ENCODE measurements at regions of chr1 and their contacts with region 1.

Region 1: DNA sequence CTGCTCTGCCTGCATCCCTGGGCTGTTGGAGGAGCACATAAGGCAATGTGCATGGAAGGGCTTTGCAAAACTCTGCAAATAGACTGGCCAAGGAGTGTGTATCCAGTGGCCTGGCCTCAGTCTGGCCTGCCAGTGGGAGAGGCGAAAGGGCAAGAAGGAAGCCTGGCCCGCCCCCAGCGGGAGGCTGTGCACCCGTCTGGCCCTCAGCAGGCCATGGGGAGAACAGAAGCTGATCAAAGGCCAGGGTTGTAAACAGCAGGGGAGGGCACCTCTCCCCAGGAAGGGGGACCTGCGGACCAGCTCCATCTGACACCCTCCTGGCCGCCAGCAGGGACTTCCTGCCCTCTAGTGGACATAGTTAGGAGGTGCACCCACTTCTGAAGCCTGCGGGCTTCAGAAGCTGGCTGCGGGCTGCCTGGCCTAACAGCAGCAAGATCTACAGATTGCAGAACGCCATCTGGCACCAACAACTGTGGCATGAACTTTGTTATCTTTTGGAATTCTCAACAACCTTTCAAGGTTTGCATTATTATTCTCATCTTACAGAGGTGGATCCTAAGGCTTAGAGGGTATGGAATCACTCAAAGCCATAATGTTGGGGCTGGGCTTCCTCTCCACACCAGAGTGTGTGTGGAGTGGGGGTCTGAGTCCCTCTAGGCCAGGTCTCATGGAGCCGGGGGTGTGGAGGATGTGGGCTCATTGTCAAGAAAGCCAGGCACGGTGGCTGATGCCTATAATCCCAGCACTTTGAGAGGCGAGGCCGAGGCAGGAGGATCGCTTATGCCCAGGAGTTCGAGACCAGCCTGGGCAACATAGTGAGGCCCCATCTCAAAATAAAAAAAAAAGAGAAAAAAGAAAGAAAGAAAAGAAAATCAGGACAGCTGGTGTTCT is 18.9 kb upstream of the CDK18 start:
- DNase-seq: peak; percentile 84
- H3K4me3 ChIP-seq: no peak overlapping the region
- H3K27ac ChIP-seq: no peak overlapping the region
- H3K4me1 ChIP-seq: no peaks in the 10 kb centered on the region
- H3K27me3 ChIP-seq: no peaks in the 10 kb centered on the region
- CTCF ChIP-seq: peak; percentile 96

Region 2: GRCh38 chr1:205335643-205336091 is 149.9 kb before region 1 on chr1:
- CTCF ChIA-PET with region 1: interaction called, 13 read pairs
- POLR2A ChIA-PET with region 1: no interaction called
- intact Hi-C with region 1: loop called (anchors 1 kb)
- DNase-seq: peak; percentile 84
- H3K4me3 ChIP-seq: no peak overlapping the region
- H3K27ac ChIP-seq: no peak overlapping the region
- H3K4me1 ChIP-seq: no peaks in the 10 kb centered on the region
- H3K27me3 ChIP-seq: no peaks in the 10 kb centered on the region
- CTCF ChIP-seq: peak; percentile 99

Region 3: DNA sequence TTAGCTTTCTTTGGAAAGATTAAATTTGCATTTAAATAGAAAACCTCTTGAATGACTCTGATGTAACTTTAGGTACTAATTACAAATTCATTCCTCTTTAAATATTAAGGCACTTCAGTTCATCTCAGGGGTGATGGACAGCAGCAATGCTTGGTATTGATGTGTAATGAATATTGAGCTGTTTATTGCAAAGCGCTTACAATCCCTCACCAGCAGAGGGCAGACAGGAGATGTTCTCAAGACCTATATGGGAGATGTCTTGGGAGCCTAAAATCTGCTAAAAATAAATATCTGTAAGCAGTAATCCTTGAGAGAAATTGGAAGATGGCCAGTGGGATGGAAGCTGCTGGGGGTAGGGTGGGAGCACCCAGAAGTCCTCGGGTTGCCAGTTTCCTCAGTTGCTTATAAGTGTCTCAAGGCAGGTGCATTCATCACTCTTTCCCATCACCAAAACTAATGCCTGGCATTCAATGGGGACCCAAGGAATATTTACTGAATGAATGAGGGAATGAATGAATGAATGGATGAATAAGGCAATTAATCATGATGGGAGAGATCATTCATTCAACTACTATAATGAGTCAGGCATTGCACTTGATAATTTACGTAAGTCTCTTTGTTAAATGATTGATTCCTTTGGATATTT is 131.2 kb before region 1 on chr1:
- CTCF ChIA-PET with region 1: interaction called, 47 read pairs
- POLR2A ChIA-PET with region 1: no interaction called
- intact Hi-C with region 1: loop called (anchors 1 kb)
- DNase-seq: peak; percentile 81
- H3K4me3 ChIP-seq: no peak overlapping the region
- H3K27ac ChIP-seq: no peak overlapping the region
- H3K4me1 ChIP-seq: peaks cover 15% of the 10 kb centered on the region
- H3K27me3 ChIP-seq: no peaks in the 10 kb centered on the region
- CTCF ChIP-seq: peak; percentile 94

Region 4: DNA sequence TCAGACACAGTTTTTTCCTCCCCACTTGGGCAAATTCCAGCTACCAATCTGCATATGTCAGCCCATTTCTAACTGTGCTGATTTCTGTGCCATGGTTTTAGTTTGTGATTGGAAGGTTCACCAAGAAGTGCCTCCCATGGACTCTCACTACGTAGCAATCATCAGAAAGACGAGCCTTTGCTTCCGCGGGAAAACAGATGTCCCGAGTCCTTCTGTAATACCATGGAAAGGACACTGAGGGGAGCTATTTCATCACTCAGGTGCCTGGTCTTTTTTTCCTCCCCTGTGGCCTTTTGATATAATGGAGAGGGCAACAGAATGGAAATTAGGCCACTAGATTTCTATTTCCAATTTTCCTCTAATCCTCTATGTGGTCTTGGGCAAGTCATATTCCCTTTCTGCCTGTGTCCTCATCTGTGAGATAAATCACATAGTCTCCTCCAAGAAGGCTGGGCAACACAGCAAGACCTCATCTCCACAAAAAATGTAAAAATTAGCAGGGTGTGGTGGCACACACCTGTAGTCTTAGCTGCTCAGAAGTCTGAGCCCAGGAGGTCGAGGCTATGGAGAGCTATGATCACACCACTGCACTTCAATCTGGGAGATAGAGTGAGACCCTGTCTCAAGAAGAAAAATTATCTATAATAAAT is 88.5 kb before region 1 on chr1:
- CTCF ChIA-PET with region 1: interaction called, 45 read pairs
- POLR2A ChIA-PET with region 1: no interaction called
- intact Hi-C with region 1: loop called (anchors 1 kb)
- DNase-seq: peak; percentile 88
- H3K4me3 ChIP-seq: no peak overlapping the region
- H3K27ac ChIP-seq: no peak overlapping the region
- H3K4me1 ChIP-seq: peaks cover 20% of the 10 kb centered on the region
- H3K27me3 ChIP-seq: no peaks in the 10 kb centered on the region
- CTCF ChIP-seq: peak; percentile 87